ENCODE measurements at regions of chr1 and their contacts with region 1.

Region 1: GRCh38 chr1:228804671-228805413 is 69.6 kb downstream of the RHOU start:
- DNase-seq: peak; percentile 90
- ATAC-seq: peak; percentile 94
- H3K4me3 Mint-ChIP-seq: peak overlapping the region; percentile 63
- H3K27ac Mint-ChIP-seq: peak overlapping the region; percentile 94
- H3K4me1 Mint-ChIP-seq: peaks cover 50% of the 10 kb centered on the region
- H3K27me3 Mint-ChIP-seq: no peaks in the 10 kb centered on the region

Region 2: GRCh38 chr1:228794173-228794572 is 10.7 kb before region 1 on chr1:
- CTCF ChIA-PET with region 1: interaction called, 33 read pairs
- DNase-seq: peak; percentile 76
- ATAC-seq: peak; percentile 73
- H3K4me3 Mint-ChIP-seq: no peak overlapping the region
- H3K27ac Mint-ChIP-seq: no peak overlapping the region
- H3K4me1 Mint-ChIP-seq: peaks cover 34% of the 10 kb centered on the region
- H3K27me3 Mint-ChIP-seq: no peaks in the 10 kb centered on the region